ENCODE measurements at regions of chr10 and their contacts with region 1.

Region 1: GRCh38 chr10:110225756-110226542 is 18.5 kb downstream of the MXI1 start:
- DNase-seq: peak; percentile 92 to 95 (median 95)
- ATAC-seq: peak; percentile 55 to 78 (median 70)
- H3K4me3 ChIP-seq: peak overlapping the region; percentile 50 to 93 (median 87)
- H3K27ac ChIP-seq: peak overlapping the region; percentile 76 to 96 (median 88)
- H3K4me1 ChIP-seq: peaks cover 12 to 61% (median 39%) of the 10 kb centered on the region in 12 donors
- H3K27me3 ChIP-seq: no peaks in the 10 kb centered on the region
- CTCF ChIP-seq: peak; percentile 55 to 91 (median 72)
- POLR2A ChIP-seq: peak in 1 of 2 donors; percentile 39

Region 2: DNA sequence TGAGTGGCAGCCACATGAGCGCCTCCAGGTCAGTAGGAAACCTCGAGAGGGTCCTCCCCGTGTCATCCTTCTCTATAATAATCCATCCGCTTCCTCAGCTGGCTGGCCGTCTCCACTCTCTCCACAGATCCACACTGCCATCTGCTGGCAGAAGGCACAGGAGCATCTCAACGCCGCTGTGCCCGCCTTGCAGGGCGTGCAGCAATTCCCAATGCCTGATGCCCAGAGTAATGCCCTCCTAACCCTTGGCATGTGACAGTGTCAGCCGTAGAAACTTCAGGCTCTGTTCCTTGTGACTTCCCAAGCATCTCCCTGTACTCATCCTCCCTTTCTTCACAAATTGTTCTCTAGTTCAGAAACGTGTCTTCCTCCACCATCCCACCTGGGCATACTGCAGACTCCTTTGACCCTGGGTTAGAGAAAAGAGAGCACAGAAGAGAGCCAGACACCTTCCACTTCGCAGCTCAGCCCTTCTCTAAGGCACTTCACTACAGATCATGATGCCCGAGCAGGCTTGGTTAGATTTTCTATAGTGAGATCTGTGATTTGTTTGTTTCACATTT is 373.4 kb before region 1 on chr10:
- intact Hi-C with region 1: no loop called
- DNase-seq: peak; percentile 71 to 85 (median 74)
- ATAC-seq: peak; percentile 71 to 90 (median 82)
- H3K4me3 ChIP-seq: no peak overlapping the region
- H3K27ac ChIP-seq: no peak overlapping the region
- H3K4me1 ChIP-seq: peaks cover 0 to 18% (median 6%) of the 10 kb centered on the region in 12 donors
- H3K27me3 ChIP-seq: no peaks in the 10 kb centered on the region
- CTCF ChIP-seq: peak; percentile 80 to 96 (median 92)
- POLR2A ChIP-seq: no peak

Region 3: DNA sequence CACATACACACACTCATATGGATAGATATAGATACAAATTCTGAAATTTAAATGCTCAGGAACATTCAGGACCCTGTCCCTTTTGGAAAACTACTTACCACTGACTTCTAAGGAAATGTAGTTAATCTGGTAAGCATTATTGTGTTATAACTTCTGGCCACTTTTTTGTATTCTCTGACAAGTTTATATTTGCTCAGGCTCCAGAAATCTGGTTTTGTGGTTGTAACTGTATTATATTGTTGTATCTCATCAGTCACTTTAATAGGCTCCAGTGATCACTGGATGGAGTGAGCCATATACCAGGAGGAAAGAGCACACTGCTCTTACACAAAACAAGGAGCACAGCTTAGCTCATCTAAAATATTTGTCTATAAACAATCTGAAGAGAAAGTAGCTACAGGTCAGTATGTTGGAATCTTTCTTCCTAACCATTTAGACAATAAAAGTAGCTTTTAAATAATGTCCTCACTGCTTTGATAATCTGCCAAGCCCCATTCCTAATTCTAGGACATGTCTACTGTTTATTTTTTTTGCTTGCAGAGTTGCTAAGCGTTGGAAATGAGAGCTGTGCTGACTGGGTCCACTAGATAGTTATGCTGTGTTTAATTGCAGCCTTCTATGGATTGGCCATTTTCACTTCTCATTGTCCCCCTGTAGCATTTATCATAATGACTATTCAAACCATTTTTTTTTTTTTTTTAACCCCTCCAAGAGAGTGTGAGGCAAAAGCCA is 35.0 kb after region 1 on chr10:
- intact Hi-C with region 1: loop called in 2 of 10 experiments (anchors 5 kb)
- DNase-seq: no peak
- ATAC-seq: peak; percentile 59 to 88 (median 83)
- H3K4me3 ChIP-seq: no peak overlapping the region
- H3K27ac ChIP-seq: peak overlapping the region; percentile 32 to 68 (median 58)
- H3K4me1 ChIP-seq: peaks cover 0 to 71% (median 39%) of the 10 kb centered on the region in 12 donors
- H3K27me3 ChIP-seq: no peaks in the 10 kb centered on the region
- CTCF ChIP-seq: no peak
- POLR2A ChIP-seq: no peak

Region 4: DNA sequence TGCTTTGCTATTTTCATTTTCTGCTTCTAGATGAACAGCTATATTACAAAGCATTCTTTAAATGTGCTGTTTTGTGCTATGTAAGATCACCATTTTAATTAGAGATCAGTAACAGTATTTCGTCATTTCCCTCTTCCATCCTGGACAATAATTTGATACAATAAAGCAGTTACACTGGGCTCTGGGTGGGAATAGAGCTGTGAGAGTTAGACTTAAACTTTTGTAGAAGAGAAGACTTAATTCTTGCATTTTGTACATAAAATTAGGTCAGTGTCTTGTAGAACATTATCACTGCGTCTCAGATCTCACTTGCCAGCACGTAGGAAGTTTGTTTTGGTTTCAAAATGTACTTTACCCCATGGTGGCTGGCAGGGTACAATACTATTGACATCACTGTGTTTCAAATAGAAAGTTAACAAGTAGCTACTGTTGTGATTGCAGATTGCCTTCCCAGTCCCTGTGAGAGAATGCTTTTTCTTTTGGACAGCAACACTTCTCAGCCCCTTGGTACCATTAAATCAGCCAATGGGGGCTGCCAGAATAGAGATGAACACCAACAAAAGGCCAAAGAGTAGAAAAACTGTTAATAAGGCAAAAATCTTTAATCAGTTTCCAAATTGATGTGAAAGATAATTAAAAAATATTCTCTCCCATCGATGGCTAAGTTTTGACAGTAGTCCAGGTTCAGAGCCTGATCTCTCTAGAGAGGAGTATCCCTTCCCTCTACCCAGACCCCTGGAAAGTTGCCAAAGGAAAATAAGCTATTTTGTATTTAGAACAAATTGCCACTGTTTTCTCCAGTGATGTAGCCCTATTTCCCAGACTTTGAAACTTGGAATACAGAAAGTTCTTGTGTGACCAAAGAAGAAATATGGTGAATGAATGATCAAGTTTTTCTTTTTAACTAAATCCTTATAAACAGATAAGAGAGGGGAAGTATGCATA is 43.7 kb after region 1 on chr10:
- intact Hi-C with region 1: loop called in 3 of 10 experiments (anchors 2 to 5 kb)
- DNase-seq: peak in 3 of 5 donors; percentile 23 to 30 (median 30)
- ATAC-seq: peak; percentile 86 to 91 (median 90)
- H3K4me3 ChIP-seq: peak overlapping the region in 11 of 12 donors; percentile 1 to 52 (median 36)
- H3K27ac ChIP-seq: peak overlapping the region; percentile 82 to 89 (median 86)
- H3K4me1 ChIP-seq: peaks cover 5 to 90% (median 58%) of the 10 kb centered on the region in 12 donors
- H3K27me3 ChIP-seq: no peaks in the 10 kb centered on the region
- CTCF ChIP-seq: no peak
- POLR2A ChIP-seq: no peak

Region 5: GRCh38 chr10:110279407-110279986 is 53.5 kb after region 1 on chr10:
- intact Hi-C with region 1: loop called in 9 of 10 experiments (anchors 2 to 5 kb)
- DNase-seq: peak in 4 of 5 donors; percentile 34 to 57 (median 50)
- ATAC-seq: peak; percentile 39 to 75 (median 69)
- H3K4me3 ChIP-seq: peak overlapping the region in 1 of 12 donors; percentile 27
- H3K27ac ChIP-seq: peak overlapping the region in 8 of 12 donors; percentile 2 to 46 (median 26)
- H3K4me1 ChIP-seq: peaks cover 0 to 64% (median 35%) of the 10 kb centered on the region in 12 donors
- H3K27me3 ChIP-seq: no peaks in the 10 kb centered on the region
- CTCF ChIP-seq: peak; percentile 62 to 90 (median 81)
- POLR2A ChIP-seq: no peak

Region 6: GRCh38 chr10:110387983-110388687 is 162.2 kb after region 1 on chr10:
- intact Hi-C with region 1: no loop called
- DNase-seq: no peak
- ATAC-seq: no peak
- H3K4me3 ChIP-seq: no peak overlapping the region
- H3K27ac ChIP-seq: no peak overlapping the region
- H3K4me1 ChIP-seq: peaks cover 0 to 31% (median 2%) of the 10 kb centered on the region in 12 donors
- H3K27me3 ChIP-seq: no peaks in the 10 kb centered on the region
- CTCF ChIP-seq: no peak
- POLR2A ChIP-seq: no peak